ENCODE measurements at regions of chr2 and their contacts with region 1.

Region 1: GRCh38 chr2:38323623-38324022 is 53.5 kb downstream of the ATL2 start:
- DNase-seq: no peak
- ATAC-seq: no peak
- H3K4me3 ChIP-seq: no peak overlapping the region
- H3K27ac ChIP-seq: no peak overlapping the region
- H3K4me1 ChIP-seq: peaks cover 0 to 25% (median 14%) of the 10 kb centered on the region in 9 donors
- H3K27me3 ChIP-seq: no peaks in the 10 kb centered on the region
- CTCF ChIP-seq: no peak

Region 2: GRCh38 chr2:38274286-38275276 is 49.0 kb before region 1 on chr2:
- intact Hi-C with region 1: no loop called
- DNase-seq: peak in 1 of 2 donors; percentile 43
- ATAC-seq: peak in 7 of 8 donors; percentile 58 to 85 (median 72)
- H3K4me3 ChIP-seq: no peak overlapping the region
- H3K27ac ChIP-seq: no peak overlapping the region
- H3K4me1 ChIP-seq: peaks cover 0 to 6% (median 0%) of the 10 kb centered on the region in 9 donors
- H3K27me3 ChIP-seq: no peaks in the 10 kb centered on the region
- CTCF ChIP-seq: peak; percentile 22 to 77 (median 67)

Region 3: DNA sequence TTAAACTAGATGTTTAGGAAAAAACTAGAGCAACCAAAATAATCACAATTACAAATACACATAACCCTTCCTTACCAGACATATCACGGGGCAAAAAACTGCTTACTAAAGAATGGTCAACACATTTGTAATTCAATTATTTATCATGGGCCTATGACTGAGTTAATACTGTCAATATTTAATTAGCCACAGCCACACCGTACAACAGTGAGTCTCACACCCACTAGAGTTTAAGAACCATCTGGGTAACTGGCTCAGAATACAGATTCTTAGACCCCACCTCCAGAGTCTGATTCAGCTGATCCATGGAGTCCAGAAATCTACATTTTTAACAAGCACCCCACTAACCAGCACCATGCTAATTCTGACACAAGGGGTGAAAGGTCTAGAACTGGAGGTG is 38.6 kb after region 1 on chr2:
- intact Hi-C with region 1: loop called in 3 of 10 experiments (anchors 5 kb)
- DNase-seq: no peak
- ATAC-seq: no peak
- H3K4me3 ChIP-seq: no peak overlapping the region
- H3K27ac ChIP-seq: no peak overlapping the region
- H3K4me1 ChIP-seq: peaks cover 7 to 51% (median 31%) of the 10 kb centered on the region in 9 donors
- H3K27me3 ChIP-seq: no peaks in the 10 kb centered on the region
- CTCF ChIP-seq: no peak

Region 4: DNA sequence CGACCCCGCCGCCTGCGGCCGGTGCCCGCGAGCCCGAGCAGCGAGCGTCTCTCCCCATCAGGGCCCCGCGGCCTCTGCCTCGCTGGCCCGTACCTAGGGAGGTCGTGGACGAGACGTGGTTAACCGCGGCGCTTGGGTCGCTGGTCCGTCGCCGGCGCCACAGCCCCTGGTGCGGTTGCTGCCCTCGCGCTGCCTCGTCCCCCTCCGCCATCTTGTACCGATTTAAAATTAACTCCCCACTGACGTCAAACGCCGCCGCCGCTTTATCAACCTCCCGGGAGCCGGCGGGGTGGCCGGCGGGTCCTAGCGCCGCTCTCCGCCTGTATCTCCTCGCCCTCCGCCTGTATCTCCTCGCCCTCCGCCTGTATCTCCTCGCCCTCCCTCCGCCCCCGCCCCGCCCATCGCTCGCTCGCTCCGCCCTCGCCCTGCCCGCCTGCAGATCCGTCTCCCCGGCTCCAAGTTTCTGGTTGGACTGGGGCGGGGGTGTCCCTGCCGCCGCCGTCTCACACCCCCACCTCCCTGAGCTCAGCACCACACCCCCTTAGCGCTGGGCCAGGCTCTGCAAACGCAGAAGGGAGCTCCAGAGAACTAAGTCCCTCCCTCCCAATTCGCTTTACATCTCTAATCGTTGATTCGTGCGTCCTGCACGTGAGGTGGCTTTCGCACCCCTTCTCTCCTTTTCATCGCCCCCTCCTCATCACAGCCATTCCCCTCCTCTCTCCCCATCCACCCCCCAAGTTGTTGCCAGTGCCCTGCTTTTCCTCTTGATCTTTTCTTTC is 53.6 kb after region 1 on chr2 and contains the start of gene ATL2:
- intact Hi-C with region 1: loop called in 5 of 10 experiments (anchors 5 to 10 kb)
- DNase-seq: peak; percentile 96 to 97
- ATAC-seq: peak; percentile 93 to 97 (median 94)
- H3K4me3 ChIP-seq: peak within 1 kb of the TSS; percentile 87 to 100 (median 94)
- H3K27ac ChIP-seq: peak within 1 kb of the TSS; percentile 94 to 100 (median 99)
- H3K4me1 ChIP-seq: peaks cover 0 to 54% (median 34%) of the 10 kb centered on the region in 9 donors
- H3K27me3 ChIP-seq: no peaks in the 10 kb centered on the region
- CTCF ChIP-seq: no peak
- total RNA-seq, gene ATL2: 24.4 to 46.2 (median 31.3) TPM

Region 5: GRCh38 chr2:38465789-38466127 is 142.1 kb after region 1 on chr2:
- intact Hi-C with region 1: loop called in 6 of 10 experiments (anchors 5 to 10 kb)
- DNase-seq: peak in 1 of 2 donors; percentile 23
- ATAC-seq: peak in 4 of 8 donors; percentile 50 to 70 (median 60)
- H3K4me3 ChIP-seq: no peak overlapping the region
- H3K27ac ChIP-seq: no peak overlapping the region
- H3K4me1 ChIP-seq: no peaks in the 10 kb centered on the region
- H3K27me3 ChIP-seq: no peaks in the 10 kb centered on the region
- CTCF ChIP-seq: peak; percentile 10 to 63 (median 45)

Region 6: GRCh38 chr2:38734299-38735058 is 410.9 kb after region 1 on chr2:
- intact Hi-C with region 1: loop called in 5 of 10 experiments (anchors 5 to 10 kb)
- DNase-seq: peak in 1 of 2 donors; percentile 55
- ATAC-seq: peak in 6 of 8 donors; percentile 50 to 64 (median 56)
- H3K4me3 ChIP-seq: no peak overlapping the region
- H3K27ac ChIP-seq: peak overlapping the region in 1 of 10 donors; percentile 9
- H3K4me1 ChIP-seq: peaks cover 0 to 37% (median 18%) of the 10 kb centered on the region in 9 donors
- H3K27me3 ChIP-seq: no peaks in the 10 kb centered on the region
- CTCF ChIP-seq: no peak